ENCODE measurements at regions of chr1 and their contacts with region 1.

Region 1: GRCh38 chr1:29209173-29209572 is 21.6 kb downstream of the MECR start:
- DNase-seq: no peak
- H3K4me3 ChIP-seq: no peak overlapping the region
- H3K27ac ChIP-seq: no peak overlapping the region
- H3K4me1 ChIP-seq: no peaks in the 10 kb centered on the region
- H3K27me3 ChIP-seq: no peaks in the 10 kb centered on the region
- CTCF ChIP-seq: no peak

Region 2: GRCh38 chr1:28789412-28789811 is 419.8 kb before region 1 on chr1:
- intact Hi-C with region 1: loop called (anchors 5 kb)
- DNase-seq: no peak
- H3K4me3 ChIP-seq: no peak overlapping the region
- H3K27ac ChIP-seq: no peak overlapping the region
- H3K4me1 ChIP-seq: no peaks in the 10 kb centered on the region
- H3K27me3 ChIP-seq: no peaks in the 10 kb centered on the region
- CTCF ChIP-seq: no peak

Region 3: DNA sequence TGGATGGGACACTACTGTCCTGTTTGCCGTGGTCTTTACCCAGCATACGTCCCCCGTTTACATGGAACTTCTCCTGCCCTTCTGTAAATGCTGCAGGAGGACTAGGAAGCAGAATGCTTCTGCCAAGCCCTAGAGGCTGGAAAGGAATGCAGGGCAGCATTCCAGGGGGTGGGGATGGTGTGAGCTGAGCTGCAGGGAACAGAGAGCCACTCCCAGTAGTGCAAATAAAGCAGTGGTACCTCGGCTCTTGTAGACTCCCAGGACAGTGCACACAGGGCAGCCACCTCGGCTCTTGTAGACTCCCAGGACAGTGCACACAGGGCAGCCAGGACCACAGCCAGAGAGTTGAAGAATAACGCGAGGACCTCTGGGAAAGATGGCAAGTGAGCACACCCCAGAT is 62.6 kb after region 1 on chr1:
- intact Hi-C with region 1: no loop called
- DNase-seq: peak; percentile 90
- H3K4me3 ChIP-seq: no peak overlapping the region
- H3K27ac ChIP-seq: peak overlapping the region; percentile 6
- H3K4me1 ChIP-seq: peaks cover 14% of the 10 kb centered on the region
- H3K27me3 ChIP-seq: no peaks in the 10 kb centered on the region
- CTCF ChIP-seq: no peak